GM23248 (cell line): ENCODE measurements at regions of chr20 and their contacts with region 1.

Region 1: GRCh38 chr20:46767127-46767761 is 57.8 kb downstream of the SLC2A10 start:
- DNase-seq: peak; percentile 62
- H3K4me3 ChIP-seq: no peak overlapping the region
- H3K27ac ChIP-seq: no peak overlapping the region
- H3K4me1 ChIP-seq: no peaks in the 10 kb centered on the region
- H3K27me3 ChIP-seq: peaks cover 12% of the 10 kb centered on the region; the same call in 1 of the 2 replicates

Region 2: DNA sequence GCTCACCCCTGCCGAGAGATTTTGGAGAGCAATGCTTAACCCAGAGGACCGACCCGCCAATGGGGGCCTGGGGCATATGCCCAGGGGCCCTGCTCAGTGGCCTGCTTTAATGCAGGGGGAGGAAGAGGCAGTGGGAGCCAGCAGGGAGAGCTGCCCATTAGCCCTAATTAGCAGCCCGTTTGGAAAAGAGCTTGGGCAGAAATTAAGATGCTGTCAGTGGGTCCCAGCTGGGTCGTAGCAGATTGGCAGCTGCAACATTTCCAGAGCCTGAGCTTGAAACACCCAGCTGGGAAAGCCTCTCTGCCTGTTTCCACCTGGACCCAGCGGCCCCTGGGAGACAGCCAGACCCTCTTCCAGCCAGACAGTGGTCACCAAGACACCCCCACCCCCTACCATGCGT is 609.6 kb before region 1 on chr20:
- in situ Hi-C with region 1: no loop called
- DNase-seq: no peak
- H3K4me3 ChIP-seq: no peak overlapping the region
- H3K27ac ChIP-seq: no peak overlapping the region
- H3K4me1 ChIP-seq: no peaks in the 10 kb centered on the region
- H3K27me3 ChIP-seq: peaks cover 16% of the 10 kb centered on the region

Region 3: GRCh38 chr20:47146703-47147102 is 379.5 kb after region 1 on chr20:
- in situ Hi-C with region 1: loop called (anchors 10 kb)
- DNase-seq: peak; percentile 63
- H3K4me3 ChIP-seq: no peak overlapping the region
- H3K27ac ChIP-seq: no peak overlapping the region
- H3K4me1 ChIP-seq: peaks cover 10% of the 10 kb centered on the region
- H3K27me3 ChIP-seq: no peaks in the 10 kb centered on the region